GM18951 (cell line): ENCODE measurements at regions of chr2 and their contacts with region 1.

Region 1: GRCh38 chr2:230798769-230799399 is 65.9 kb upstream of the ITM2C start:
- POLR2A ChIP-seq: no peak

Region 2: DNA sequence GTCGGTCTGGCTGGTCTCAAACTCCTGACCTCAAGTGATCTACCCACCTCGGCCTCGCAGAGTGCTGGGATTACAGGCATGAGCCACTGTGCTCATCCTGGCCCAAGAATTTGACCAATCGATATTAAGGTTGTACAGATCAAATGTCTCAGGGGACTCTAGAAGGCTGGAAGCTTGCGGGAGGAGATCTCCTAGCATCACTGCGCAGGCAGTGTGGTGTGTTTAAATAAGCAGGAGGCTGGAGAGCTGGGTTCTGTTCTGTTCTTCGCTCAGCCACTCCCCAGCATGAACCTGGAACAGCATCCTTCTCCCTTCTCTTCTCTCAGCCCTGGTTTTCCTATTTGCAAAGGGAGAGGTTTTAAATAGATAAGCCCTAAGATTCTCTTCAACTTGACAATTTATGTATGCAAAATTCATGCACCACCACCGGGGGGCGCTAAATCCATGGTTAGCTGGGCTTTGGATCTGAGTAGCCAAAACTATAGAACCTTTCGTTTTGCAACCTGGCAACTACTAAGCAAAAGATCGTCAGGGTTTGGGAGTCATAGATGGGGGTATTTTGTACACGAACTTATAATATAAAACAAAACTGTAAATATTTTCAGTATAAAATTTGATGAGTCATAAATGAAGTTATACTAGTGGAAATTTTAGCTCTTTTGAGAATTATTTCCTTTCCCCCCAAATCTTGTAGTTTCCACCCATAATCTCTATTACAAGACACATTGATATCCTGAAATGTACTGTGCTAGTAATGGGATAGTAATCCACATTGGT is 790.8 kb before region 1 on chr2:
- in situ Hi-C with region 1: loop called (anchors 25 kb)
- POLR2A ChIP-seq: no peak